Ovary (tissue), 10 donors: ENCODE measurements at regions of chr20 and their contacts with region 1.

Region 1: DNA sequence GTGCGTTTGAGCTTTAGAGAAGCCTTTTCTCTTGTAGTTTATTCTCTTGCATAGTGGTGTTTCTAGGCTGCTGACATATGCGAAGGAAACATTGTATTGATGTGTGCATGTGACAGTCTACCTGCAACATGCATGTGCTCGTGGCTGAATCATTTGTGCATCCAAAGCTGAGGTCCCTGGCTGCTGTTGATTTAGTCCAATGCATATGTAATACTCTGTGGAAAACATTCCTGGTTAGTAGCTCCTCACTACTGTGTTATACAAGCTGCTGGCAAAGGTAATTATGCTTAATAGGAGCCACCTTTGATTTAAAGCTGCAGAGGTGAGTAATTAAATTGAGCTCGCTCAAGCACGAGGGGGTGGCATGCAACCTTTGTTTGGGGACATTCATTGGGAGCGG is 24.5 kb downstream of the TSHZ2 start:
- DNase-seq: no peak
- H3K4me3 ChIP-seq: no peak overlapping the region
- H3K27ac ChIP-seq: no peak overlapping the region
- H3K4me1 ChIP-seq: peaks cover 9% of the 10 kb centered on the region
- H3K27me3 ChIP-seq: no peaks in the 10 kb centered on the region
- CTCF ChIP-seq: no peak
- EP300 ChIP-seq: no peak
- POLR2A ChIP-seq: no peak

Region 2: DNA sequence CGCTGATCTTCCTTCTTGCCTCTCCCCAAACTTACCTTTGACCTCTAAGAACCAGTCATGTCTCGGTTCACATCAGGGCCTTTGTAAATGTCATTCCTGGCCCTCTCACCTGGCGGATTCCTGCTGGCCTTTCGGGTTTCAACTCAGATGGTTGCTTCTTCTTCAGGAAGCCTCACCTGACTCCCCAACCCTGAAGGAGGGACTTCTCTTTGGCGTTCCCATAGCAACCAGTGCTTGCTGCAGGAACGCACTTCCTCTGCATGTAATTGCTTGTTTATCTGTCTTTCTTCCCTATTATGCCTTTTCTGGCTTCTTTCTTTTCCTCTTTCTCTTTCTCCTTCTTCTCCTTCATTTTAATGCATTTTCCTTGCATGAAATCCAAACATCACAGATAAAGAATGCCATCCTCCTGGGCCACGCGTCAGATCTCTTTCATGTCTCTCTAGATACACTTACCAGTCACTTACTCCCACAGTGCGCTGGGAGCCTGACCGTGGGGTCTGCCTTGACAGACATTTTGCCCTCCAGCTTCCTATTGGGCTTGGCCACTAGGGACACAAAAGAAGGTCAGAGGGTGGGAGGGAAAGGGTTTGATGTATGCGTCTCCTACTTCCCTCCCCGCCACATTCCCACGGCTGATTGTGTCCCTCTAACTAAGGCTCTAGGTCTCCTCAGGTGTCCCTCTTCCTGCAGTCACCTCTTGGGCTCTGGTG is 320.2 kb before region 1 on chr20:
- intact Hi-C with region 1: no loop called
- DNase-seq: no peak
- H3K4me3 ChIP-seq: no peak overlapping the region
- H3K27ac ChIP-seq: no peak overlapping the region
- H3K4me1 ChIP-seq: no peaks in the 10 kb centered on the region
- H3K27me3 ChIP-seq: no peaks in the 10 kb centered on the region
- CTCF ChIP-seq: no peak
- EP300 ChIP-seq: no peak
- POLR2A ChIP-seq: no peak

Region 3: GRCh38 chr20:53013183-53013582 is 16.5 kb after region 1 on chr20:
- intact Hi-C with region 1: loop called in 1 of 4 experiments (anchors 2 kb)
- DNase-seq: no peak
- H3K4me3 ChIP-seq: no peak overlapping the region
- H3K27ac ChIP-seq: no peak overlapping the region
- H3K4me1 ChIP-seq: peaks cover 3% of the 10 kb centered on the region
- H3K27me3 ChIP-seq: no peaks in the 10 kb centered on the region
- CTCF ChIP-seq: no peak
- EP300 ChIP-seq: no peak
- POLR2A ChIP-seq: no peak